Activated naive CD4-positive, alpha-beta T cell treated with anti-CD3 and anti-CD28 coated beads for 36 hours (primary cell): ENCODE measurements at regions of chr12 and their contacts with region 1.

Region 1: GRCh38 chr12:89542912-89543592 is 17.2 kb upstream of the POC1B start:
- DNase-seq: peak; percentile 79
- H3K4me3 Mint-ChIP-seq: no peak overlapping the region
- H3K27ac Mint-ChIP-seq: no peak overlapping the region
- H3K4me1 Mint-ChIP-seq: peaks cover 4% of the 10 kb centered on the region
- H3K27me3 Mint-ChIP-seq: no peaks in the 10 kb centered on the region

Region 2: GRCh38 chr12:89709157-89709994 is 166.3 kb after region 1 on chr12:
- CTCF ChIA-PET with region 1: interaction called, 3 read pairs
- intact Hi-C with region 1: loop called (anchors 1 kb)
- DNase-seq: peak; percentile 99
- H3K4me3 Mint-ChIP-seq: peak overlapping the region; percentile 79
- H3K27ac Mint-ChIP-seq: peak overlapping the region; percentile 71
- H3K4me1 Mint-ChIP-seq: peaks cover 32% of the 10 kb centered on the region
- H3K27me3 Mint-ChIP-seq: no peaks in the 10 kb centered on the region

Region 3: GRCh38 chr12:90013409-90013808 is 470.4 kb after region 1 on chr12:
- CTCF ChIA-PET with region 1: interaction called, 5 read pairs
- intact Hi-C with region 1: loop called (anchors 1 kb)
- DNase-seq: no peak
- H3K4me3 Mint-ChIP-seq: no peak overlapping the region
- H3K27ac Mint-ChIP-seq: no peak overlapping the region
- H3K4me1 Mint-ChIP-seq: no peaks in the 10 kb centered on the region
- H3K27me3 Mint-ChIP-seq: no peaks in the 10 kb centered on the region

Region 4: GRCh38 chr12:90253674-90254181 is 710.7 kb after region 1 on chr12:
- CTCF ChIA-PET with region 1: no interaction called
- intact Hi-C with region 1: loop called (anchors 1 kb)
- DNase-seq: peak; percentile 60
- H3K4me3 Mint-ChIP-seq: no peak overlapping the region
- H3K27ac Mint-ChIP-seq: no peak overlapping the region
- H3K4me1 Mint-ChIP-seq: peaks cover 8% of the 10 kb centered on the region
- H3K27me3 Mint-ChIP-seq: peaks cover 2% of the 10 kb centered on the region

Region 5: DNA sequence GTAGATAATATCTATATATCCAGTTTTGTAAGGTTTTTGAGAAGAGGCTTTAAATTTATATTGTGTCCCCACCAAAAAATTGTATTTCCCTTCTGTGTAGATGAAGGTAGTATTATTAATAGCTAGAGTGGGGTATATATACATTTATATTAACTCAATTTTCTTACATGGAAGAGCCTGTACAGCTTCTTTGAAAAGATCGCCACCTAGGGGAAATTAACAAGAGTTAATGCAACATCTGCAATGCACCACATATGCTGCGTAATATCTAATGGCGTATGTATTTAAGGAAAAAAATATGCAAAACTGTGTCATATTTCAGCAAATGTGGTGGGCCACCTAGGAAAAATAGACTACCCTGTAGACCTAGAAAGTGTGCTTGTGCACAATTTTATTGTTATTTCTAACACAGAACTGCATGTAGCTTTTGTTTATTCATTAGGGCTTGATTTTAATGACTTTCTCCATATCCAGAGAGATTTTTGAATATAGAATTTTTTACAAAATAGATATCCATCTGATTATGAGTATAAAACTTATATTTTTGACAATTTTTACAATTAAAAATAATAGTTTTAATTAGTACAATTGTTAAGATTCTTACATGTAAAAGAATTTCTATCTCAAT is 1397.9 kb after region 1 on chr12:
- CTCF ChIA-PET with region 1: interaction called, 5 read pairs
- intact Hi-C with region 1: loop called (anchors 2 kb)
- DNase-seq: no peak
- H3K4me3 Mint-ChIP-seq: no peak overlapping the region
- H3K27ac Mint-ChIP-seq: no peak overlapping the region
- H3K4me1 Mint-ChIP-seq: no peaks in the 10 kb centered on the region
- H3K27me3 Mint-ChIP-seq: peaks cover 11% of the 10 kb centered on the region